ENCODE measurements at regions of chr22 and their contacts with region 1.

Region 1: GRCh38 chr22:35140879-35141745 is 75.2 kb downstream of the ISX start:
- DNase-seq: peak; percentile 81
- ATAC-seq: peak; percentile 93
- H3K4me3 Mint-ChIP-seq: no peak overlapping the region
- H3K27ac Mint-ChIP-seq: no peak overlapping the region; the same call in 1 of the 2 replicates
- H3K4me1 Mint-ChIP-seq: no peaks in the 10 kb centered on the region; the same call in 1 of the 2 replicates
- H3K27me3 Mint-ChIP-seq: no peaks in the 10 kb centered on the region; the same call in 1 of the 2 replicates
- CTCF ChIP-seq: peak; percentile 53

Region 2: GRCh38 chr22:35043252-35043931 is 97.7 kb before region 1 on chr22:
- CTCF ChIA-PET with region 1: interaction called, 94 read pairs
- POLR2A ChIA-PET with region 1: no interaction called
- DNase-seq: peak; percentile 44
- ATAC-seq: peak; percentile 79
- H3K4me3 Mint-ChIP-seq: no peak overlapping the region
- H3K27ac Mint-ChIP-seq: no peak overlapping the region
- H3K4me1 Mint-ChIP-seq: peaks cover 14% of the 10 kb centered on the region
- H3K27me3 Mint-ChIP-seq: peaks cover 2% of the 10 kb centered on the region; the same call in 1 of the 2 replicates
- CTCF ChIP-seq: no peak